A549 (cell line): ENCODE measurements at regions of chr5 and their contacts with region 1.

Region 1: DNA sequence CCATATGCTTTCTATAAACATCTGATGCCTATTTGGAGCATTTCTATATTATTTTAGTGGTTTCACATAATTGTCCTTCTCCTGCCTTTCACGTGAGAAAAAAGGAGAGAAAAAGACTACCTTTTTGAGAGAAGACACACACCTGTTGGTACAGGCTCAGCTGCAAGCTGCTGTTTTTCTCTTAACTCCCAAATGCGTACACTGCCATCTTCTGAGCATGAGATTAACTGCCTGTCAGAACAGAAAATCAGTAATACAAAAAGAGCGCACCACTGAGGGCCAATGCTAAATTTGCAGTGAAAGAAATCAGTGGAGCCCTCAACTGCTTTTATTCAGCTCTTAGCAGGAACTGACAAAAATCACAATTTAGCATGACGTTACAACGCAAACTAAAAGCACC is 54.9 kb downstream of the WDR41 start:
- DNase-seq: peak in 1 of 2 experiments; percentile 43
- ATAC-seq: peak; percentile 39 to 65; a peak in 3 of 6 replicates
- H3K4me3 ChIP-seq: no peak overlapping the region
- H3K27ac ChIP-seq: no peak overlapping the region
- H3K4me1 ChIP-seq: no peaks in the 10 kb centered on the region
- CTCF ChIP-seq: peak; percentile 51
- EP300 ChIP-seq: no peak
- POLR2A ChIP-seq: no peak
- RAD21 ChIP-seq: peak; percentile 54 to 60

Region 2: DNA sequence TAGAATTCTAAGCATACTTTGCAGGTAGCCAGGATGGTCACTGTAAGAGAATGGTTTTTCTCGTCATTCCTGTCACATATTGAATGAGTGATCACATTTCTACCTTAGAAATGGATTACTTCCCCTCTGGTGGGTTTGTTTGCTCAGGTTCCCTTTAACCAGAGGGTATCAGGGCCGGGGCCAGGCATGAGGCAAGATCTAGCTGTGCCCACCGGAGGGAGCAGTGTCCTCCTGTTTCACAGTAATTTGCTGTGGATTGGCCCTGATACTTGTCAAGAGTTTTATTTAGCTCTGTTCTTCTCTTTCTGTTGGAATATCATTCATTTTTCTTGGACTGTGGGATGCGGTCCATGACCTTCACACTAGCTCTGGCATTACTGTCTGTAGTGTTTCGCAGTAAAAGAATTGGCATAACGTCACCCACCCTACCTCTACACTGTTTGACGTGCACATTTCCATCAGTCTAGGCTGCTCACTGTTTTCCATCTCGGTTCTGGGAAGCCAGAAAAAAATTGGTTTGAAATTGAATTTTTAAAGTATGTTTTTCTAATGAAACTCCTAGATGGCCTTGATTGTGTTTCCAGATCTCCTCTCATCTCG is 307.7 kb before region 1 on chr5:
- CTCF ChIA-PET with region 1: interaction called, 20 read pairs
- POLR2A ChIA-PET with region 1: no interaction called
- DNase-seq: peak; percentile 19 to 47
- ATAC-seq: peak; percentile 67 to 79; a peak in 5 of 6 replicates
- H3K4me3 ChIP-seq: no peak overlapping the region
- H3K27ac ChIP-seq: no peak overlapping the region
- H3K4me1 ChIP-seq: peaks cover 15% of the 10 kb centered on the region
- CTCF ChIP-seq: peak; percentile 49
- EP300 ChIP-seq: no peak
- POLR2A ChIP-seq: no peak
- RAD21 ChIP-seq: peak; percentile 61 to 62

Region 3: GRCh38 chr5:77369566-77369965 is 67.6 kb before region 1 on chr5:
- CTCF ChIA-PET with region 1: no interaction called
- POLR2A ChIA-PET with region 1: no interaction called
- DNase-seq: no peak
- ATAC-seq: no peak
- H3K4me3 ChIP-seq: no peak overlapping the region
- H3K27ac ChIP-seq: no peak overlapping the region
- H3K4me1 ChIP-seq: no peaks in the 10 kb centered on the region
- CTCF ChIP-seq: no peak
- EP300 ChIP-seq: no peak
- POLR2A ChIP-seq: no peak
- RAD21 ChIP-seq: no peak

Region 4: GRCh38 chr5:77426670-77427069 is 10.5 kb before region 1 on chr5:
- CTCF ChIA-PET with region 1: interaction called, 15 read pairs
- POLR2A ChIA-PET with region 1: no interaction called
- DNase-seq: peak; percentile 13 to 39
- ATAC-seq: peak; percentile 66 to 68; a peak in 4 of 6 replicates
- H3K4me3 ChIP-seq: no peak overlapping the region
- H3K27ac ChIP-seq: peak overlapping the region; percentile 23 to 52; a peak in 4 of 6 replicates
- H3K4me1 ChIP-seq: peaks cover 35% of the 10 kb centered on the region
- CTCF ChIP-seq: no peak
- EP300 ChIP-seq: no peak
- POLR2A ChIP-seq: no peak
- RAD21 ChIP-seq: no peak